ENCODE measurements at regions of chr7 and their contacts with region 1.

Region 1: GRCh38 chr7:22667562-22668239 is 59.3 kb upstream of the IL6 start:
- DNase-seq: peak; percentile 93
- ATAC-seq: peak; percentile 80
- H3K4me3 ChIP-seq: peak overlapping the region; percentile 20; the same call in 1 of the 2 replicates
- H3K27ac ChIP-seq: peak overlapping the region; percentile 99
- H3K4me1 ChIP-seq: peaks cover 55% of the 10 kb centered on the region
- H3K27me3 ChIP-seq: no peaks in the 10 kb centered on the region
- CTCF ChIP-seq: no peak

Region 2: GRCh38 chr7:20959271-20959670 is 1708.4 kb before region 1 on chr7:
- CTCF ChIA-PET with region 1: no interaction called
- POLR2A ChIA-PET with region 1: no interaction called
- intact Hi-C with region 1: no loop called
- DNase-seq: peak; percentile 92
- ATAC-seq: peak; percentile 94
- H3K4me3 ChIP-seq: peak overlapping the region; percentile 6; the same call in 1 of the 2 replicates
- H3K27ac ChIP-seq: peak overlapping the region; percentile 7; the same call in 1 of the 2 replicates
- H3K4me1 ChIP-seq: peaks cover 27% of the 10 kb centered on the region
- H3K27me3 ChIP-seq: peaks cover 37% of the 10 kb centered on the region
- CTCF ChIP-seq: no peak

Region 3: GRCh38 chr7:22589641-22590201 is 78.0 kb before region 1 on chr7:
- CTCF ChIA-PET with region 1: interaction called, 3 read pairs
- POLR2A ChIA-PET with region 1: no interaction called
- intact Hi-C with region 1: loop called (anchors 2 kb)
- DNase-seq: peak; percentile 79
- ATAC-seq: peak; percentile 69
- H3K4me3 ChIP-seq: peak overlapping the region; percentile 12; the same call in 1 of the 2 replicates
- H3K27ac ChIP-seq: peak overlapping the region; percentile 83
- H3K4me1 ChIP-seq: peaks cover 40% of the 10 kb centered on the region
- H3K27me3 ChIP-seq: no peaks in the 10 kb centered on the region
- CTCF ChIP-seq: no peak

Region 4: GRCh38 chr7:22718200-22718711 is 50.6 kb after region 1 on chr7:
- CTCF ChIA-PET with region 1: no interaction called
- POLR2A ChIA-PET with region 1: interaction called, 3 read pairs
- intact Hi-C with region 1: loop called (anchors 1 kb)
- DNase-seq: peak; percentile 94
- ATAC-seq: peak; percentile 95
- H3K4me3 ChIP-seq: peak overlapping the region; percentile 41; the same call in 1 of the 2 replicates
- H3K27ac ChIP-seq: peak overlapping the region; percentile 91
- H3K4me1 ChIP-seq: peaks cover 26% of the 10 kb centered on the region
- H3K27me3 ChIP-seq: no peaks in the 10 kb centered on the region
- CTCF ChIP-seq: no peak